PC-9 (cell line): ENCODE measurements at regions of chr15 and their contacts with region 1.

Region 1: DNA sequence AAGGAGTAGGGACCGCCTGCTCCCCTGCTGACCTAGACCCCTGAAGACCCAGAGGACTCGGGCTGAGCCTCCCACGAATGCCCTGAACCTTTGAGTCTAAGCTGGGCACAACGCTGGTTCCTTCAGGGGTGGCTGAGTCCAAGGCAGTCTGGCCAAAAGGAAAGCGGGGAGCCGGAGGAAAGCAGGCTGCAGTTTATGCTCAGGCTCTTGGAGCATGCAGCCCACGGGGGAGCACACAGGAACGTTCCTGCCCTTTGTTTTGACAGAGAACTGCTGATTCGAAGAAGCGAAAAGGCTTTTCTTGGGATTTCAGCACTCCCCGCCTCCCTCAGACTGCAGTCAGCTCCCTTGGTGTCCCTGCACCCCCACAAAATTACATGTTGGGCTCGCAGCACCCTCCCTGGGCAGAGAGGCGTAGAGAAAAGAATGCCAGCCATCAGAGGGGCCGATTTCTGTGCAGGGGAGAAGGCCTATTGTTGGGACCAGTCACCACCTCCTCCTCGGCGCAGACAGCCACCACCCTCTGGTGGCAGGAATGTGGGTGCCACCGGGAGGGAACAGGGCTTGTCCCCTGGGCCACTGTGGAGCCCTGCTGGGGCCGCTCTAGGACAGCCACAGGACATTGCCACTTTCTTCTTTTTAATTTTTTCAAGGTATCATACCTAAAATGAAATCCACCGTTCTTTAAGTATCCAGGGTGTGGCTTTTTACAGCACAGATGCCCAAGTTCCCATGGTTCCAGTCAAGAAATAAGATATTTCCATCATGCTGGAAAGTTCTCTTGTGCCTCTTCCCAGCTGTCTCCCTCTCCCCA is 72.2 kb downstream of the SMAD6 start:
- DNase-seq: peak; percentile 66 to 92
- H3K4me3 ChIP-seq: no peak overlapping the region
- H3K27ac ChIP-seq: no peak overlapping the region
- H3K4me1 ChIP-seq: peaks cover 27% of the 10 kb centered on the region
- H3K27me3 ChIP-seq: no peaks in the 10 kb centered on the region
- CTCF ChIP-seq: peak; percentile 94

Region 2: DNA sequence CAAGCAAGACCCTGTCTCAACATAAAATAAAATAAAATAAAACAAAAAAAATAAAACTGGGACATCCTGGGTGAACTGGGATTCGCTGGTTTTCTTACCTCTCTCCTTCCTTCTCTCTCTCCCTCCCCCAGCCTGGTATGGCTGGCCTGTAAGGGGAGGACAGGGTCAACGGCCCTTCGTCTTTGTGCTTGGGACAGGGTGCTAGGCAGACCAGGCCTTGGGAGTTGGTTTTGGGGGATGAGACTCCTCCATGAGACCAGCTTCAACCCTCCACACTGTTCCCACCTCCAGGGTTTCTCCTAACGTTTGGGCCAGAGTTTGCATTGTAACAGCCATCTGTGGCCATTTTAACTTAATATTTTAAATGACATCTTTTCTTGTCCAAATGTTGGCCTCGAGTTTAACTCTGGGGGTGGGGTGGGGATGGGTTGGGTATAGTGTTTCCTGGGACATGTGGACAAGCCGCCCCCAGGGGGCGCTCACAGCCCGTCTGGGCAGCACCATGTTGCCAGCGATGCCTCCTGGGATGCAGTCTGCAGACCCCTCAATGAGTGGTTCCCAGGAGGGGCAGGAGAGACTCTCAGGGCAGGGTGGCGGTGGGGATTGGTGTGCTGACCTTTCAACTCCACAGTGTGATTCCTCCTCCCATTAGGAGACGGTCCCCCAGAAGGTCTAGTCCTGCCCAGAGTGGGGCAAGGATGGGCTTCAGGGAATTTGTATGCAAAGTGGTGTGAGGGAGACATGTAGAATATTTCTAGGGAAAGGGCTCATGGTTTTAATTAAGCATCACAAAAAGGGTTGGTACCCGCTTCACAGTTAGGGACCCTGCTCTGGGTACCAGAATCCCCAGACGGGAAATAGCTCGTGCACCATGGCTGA is 170.7 kb before region 1 on chr15:
- CTCF ChIA-PET with region 1: no interaction called
- POLR2A ChIA-PET with region 1: no interaction called
- intact Hi-C with region 1: loop called (anchors 1 kb)
- DNase-seq: peak in 1 of 2 experiments; percentile 59
- H3K4me3 ChIP-seq: no peak overlapping the region
- H3K27ac ChIP-seq: no peak overlapping the region
- H3K4me1 ChIP-seq: no peaks in the 10 kb centered on the region
- H3K27me3 ChIP-seq: no peaks in the 10 kb centered on the region
- CTCF ChIP-seq: peak; percentile 81

Region 3: DNA sequence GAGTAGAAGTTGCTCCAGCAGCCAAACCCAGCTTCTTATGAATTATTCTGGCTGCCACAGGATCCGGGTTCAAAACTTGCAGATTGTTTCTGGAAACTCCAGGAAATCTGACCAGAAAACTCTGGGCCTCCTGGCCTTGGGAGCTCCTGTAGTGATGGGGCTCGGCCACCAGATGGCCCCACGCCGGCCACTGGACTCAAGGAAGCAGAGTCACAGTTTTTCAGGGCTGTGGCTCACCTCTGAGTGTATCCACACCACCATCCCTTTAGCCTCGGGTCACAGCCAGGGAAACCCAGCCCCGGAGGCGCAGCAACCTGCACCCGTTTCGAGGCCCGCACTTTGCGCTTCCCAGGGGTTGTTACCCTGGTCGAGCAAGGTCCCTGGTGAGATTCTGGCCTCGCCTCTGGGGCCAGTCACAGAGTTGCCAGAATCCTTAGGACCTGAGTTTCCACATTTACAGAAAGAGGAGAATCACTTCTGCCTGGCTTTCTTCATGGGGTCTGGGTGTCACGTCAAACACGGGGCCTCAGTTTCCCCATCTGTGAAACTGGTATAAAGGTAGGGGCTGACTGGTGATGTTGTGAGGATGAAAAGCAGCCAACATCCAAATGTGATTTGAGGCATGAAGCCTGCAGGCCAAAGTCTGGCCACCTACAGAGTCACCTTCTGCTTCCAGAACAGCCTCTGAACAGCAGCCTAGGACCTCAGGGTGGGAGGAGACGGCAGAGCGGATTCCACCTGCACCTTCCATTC is 154.9 kb before region 1 on chr15:
- CTCF ChIA-PET with region 1: interaction called, 5 read pairs
- POLR2A ChIA-PET with region 1: no interaction called
- intact Hi-C with region 1: loop called (anchors 1 kb)
- DNase-seq: peak; percentile 65 to 82
- H3K4me3 ChIP-seq: no peak overlapping the region
- H3K27ac ChIP-seq: no peak overlapping the region
- H3K4me1 ChIP-seq: peaks cover 4% of the 10 kb centered on the region; the same call in 1 of the 2 replicates
- H3K27me3 ChIP-seq: no peaks in the 10 kb centered on the region
- CTCF ChIP-seq: peak; percentile 80

Region 4: GRCh38 chr15:66730168-66731021 is 43.8 kb before region 1 on chr15:
- CTCF ChIA-PET with region 1: no interaction called
- POLR2A ChIA-PET with region 1: no interaction called
- intact Hi-C with region 1: no loop called
- DNase-seq: peak in 1 of 2 experiments; percentile 46
- H3K4me3 ChIP-seq: no peak overlapping the region
- H3K27ac ChIP-seq: no peak overlapping the region
- H3K4me1 ChIP-seq: peaks cover 7% of the 10 kb centered on the region; the same call in 1 of the 2 replicates
- H3K27me3 ChIP-seq: no peaks in the 10 kb centered on the region
- CTCF ChIP-seq: no peak

Region 5: DNA sequence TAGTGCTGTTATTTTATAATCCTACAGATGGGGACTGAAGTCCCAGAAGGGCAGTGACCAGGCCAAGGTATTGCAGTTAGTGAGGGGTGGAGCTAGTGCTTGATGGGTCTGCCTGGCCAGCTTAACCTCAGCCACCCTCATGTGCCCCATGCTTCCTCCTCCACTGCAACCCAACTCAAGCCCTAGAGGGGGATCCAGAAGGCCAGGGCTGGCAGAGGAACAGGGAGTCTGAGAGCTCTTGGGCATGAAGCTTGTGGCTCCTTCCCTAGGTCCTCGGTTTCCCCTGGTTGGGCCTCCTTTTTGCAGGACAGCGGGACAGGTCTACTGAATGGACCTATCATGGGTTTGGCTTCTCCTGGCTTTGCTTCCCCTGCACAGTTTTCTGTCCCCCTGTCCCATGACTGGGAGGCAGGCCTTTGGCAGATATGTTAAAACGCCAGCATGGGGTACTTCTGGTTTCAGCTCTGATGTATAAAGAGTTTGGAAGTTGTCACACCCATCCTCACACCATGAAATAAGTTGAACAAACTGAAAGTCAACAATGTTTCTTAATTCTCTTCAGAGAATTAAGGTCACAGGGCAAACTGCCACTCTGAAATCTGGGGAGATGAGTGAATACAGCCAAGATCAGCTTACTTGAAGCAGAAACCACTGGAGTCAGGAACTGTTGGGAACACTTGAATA is 31.1 kb after region 1 on chr15:
- CTCF ChIA-PET with region 1: no interaction called
- POLR2A ChIA-PET with region 1: no interaction called
- intact Hi-C with region 1: no loop called
- DNase-seq: peak in 1 of 2 experiments; percentile 37
- H3K4me3 ChIP-seq: no peak overlapping the region
- H3K27ac ChIP-seq: 0 out of 2 replicates have a peak overlapping the region, but pooled peaks have one; percentile 26
- H3K4me1 ChIP-seq: peaks cover 58% of the 10 kb centered on the region
- H3K27me3 ChIP-seq: no peaks in the 10 kb centered on the region
- CTCF ChIP-seq: no peak

Region 6: DNA sequence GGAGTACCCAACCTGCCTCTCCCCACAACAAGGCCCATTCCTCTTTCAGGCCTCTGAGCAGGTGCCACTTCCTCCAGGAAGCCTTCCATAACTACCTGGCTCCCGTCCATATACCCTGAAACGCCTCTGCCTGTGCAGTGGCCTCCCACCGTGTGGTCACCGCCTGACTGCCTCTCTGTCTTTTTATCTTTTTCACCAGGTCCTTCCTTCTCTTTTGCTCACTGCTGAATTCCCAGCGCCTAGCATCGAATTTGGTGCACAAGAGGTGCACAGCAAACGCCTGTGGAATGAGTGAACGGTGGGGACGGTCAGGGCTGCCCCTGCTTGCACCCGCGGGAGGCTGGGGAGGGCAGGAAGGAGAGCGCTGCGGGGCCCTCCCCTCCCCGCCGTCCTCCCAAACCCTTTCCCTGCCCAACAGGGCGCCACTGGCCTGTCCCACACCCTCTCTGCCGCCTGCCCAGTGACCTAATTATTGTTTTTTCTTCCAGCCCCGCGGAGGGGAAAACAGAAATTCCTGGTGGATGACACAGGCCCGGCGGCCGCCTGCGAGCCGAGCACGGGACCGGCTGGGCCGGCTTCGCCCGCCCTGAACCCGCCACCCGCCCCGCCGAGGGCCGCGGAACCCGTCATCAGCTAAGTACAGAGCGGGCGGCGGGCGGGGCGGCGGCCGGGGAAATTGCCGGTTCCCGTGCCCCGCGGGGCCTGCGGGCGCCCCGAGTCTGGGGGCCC is 67.9 kb after region 1 on chr15:
- CTCF ChIA-PET with region 1: no interaction called
- POLR2A ChIA-PET with region 1: no interaction called
- intact Hi-C with region 1: loop called (anchors 2 kb)
- DNase-seq: peak; percentile 77 to 92
- H3K4me3 ChIP-seq: peak overlapping the region; percentile 46; the same call in 1 of the 2 replicates
- H3K27ac ChIP-seq: peak overlapping the region; percentile 81
- H3K4me1 ChIP-seq: peaks cover 29% of the 10 kb centered on the region
- H3K27me3 ChIP-seq: no peaks in the 10 kb centered on the region
- CTCF ChIP-seq: no peak

Region 7: GRCh38 chr15:66907826-66908743 is 133.9 kb after region 1 on chr15:
- CTCF ChIA-PET with region 1: no interaction called
- POLR2A ChIA-PET with region 1: no interaction called
- intact Hi-C with region 1: loop called (anchors 1 kb)
- DNase-seq: no peak
- H3K4me3 ChIP-seq: no peak overlapping the region
- H3K27ac ChIP-seq: no peak overlapping the region
- H3K4me1 ChIP-seq: no peaks in the 10 kb centered on the region
- H3K27me3 ChIP-seq: no peaks in the 10 kb centered on the region
- CTCF ChIP-seq: no peak

Region 8: DNA sequence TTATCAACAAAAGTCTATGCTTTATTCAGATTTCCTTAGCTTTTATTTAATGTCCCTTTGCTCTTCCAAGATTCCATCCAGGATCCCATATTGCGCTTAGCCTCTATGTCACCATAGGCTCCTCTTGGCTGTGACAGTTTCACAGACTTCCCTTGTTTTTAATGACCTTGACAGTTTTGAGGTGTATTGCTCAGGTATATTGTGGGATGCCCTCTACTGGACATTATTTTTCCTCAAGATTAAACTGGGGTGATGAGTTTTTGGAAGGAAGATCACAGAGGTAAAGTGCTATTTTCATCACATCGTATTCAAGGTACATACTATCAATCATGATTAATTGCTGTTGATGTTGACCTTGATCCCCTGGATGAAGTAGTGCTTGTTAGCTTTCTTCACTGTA is 192.0 kb after region 1 on chr15:
- CTCF ChIA-PET with region 1: no interaction called
- POLR2A ChIA-PET with region 1: no interaction called
- intact Hi-C with region 1: no loop called
- DNase-seq: no peak
- H3K4me3 ChIP-seq: no peak overlapping the region
- H3K27ac ChIP-seq: no peak overlapping the region
- H3K4me1 ChIP-seq: no peaks in the 10 kb centered on the region
- H3K27me3 ChIP-seq: no peaks in the 10 kb centered on the region
- CTCF ChIP-seq: peak; percentile 57